GM12878 (cell line): ENCODE measurements at regions of chr17 and their contacts with region 1.

Region 1: GRCh38 chr17:65100316-65101140 is 36.6 kb upstream of the RGS9 start:
- DNase-seq: peak; percentile 77
- ATAC-seq: peak; percentile 93
- H3K4me3 ChIP-seq: peak overlapping the region; percentile 78
- H3K27ac ChIP-seq: peak overlapping the region; percentile 87
- H3K4me1 ChIP-seq: peaks cover 12% of the 10 kb centered on the region
- H3K27me3 ChIP-seq: no peaks in the 10 kb centered on the region
- CTCF ChIP-seq: peak; percentile 77 to 82 (median 82)
- EP300 ChIP-seq: no peak
- POLR2A ChIP-seq: peak; percentile 53; the same call in 1 of the 2 replicates
- RAD21 ChIP-seq: peak; percentile 76

Region 2: GRCh38 chr17:64968652-64969501 is 131.7 kb before region 1 on chr17:
- CTCF ChIA-PET with region 1: interaction called, 33 read pairs
- POLR2A ChIA-PET with region 1: interaction called, 3 read pairs
- RAD21 ChIA-PET with region 1: interaction called, 19 read pairs
- SMC1A ChIA-PET with region 1: interaction called, 60 read pairs
- in situ Hi-C with region 1: loop called (anchors 5 kb)
- intact Hi-C with region 1: loop called (anchors 2 kb)
- DNase-seq: peak; percentile 20
- ATAC-seq: peak; percentile 66
- H3K4me3 ChIP-seq: no peak overlapping the region
- H3K27ac ChIP-seq: peak overlapping the region; percentile 45
- H3K4me1 ChIP-seq: peaks cover 42% of the 10 kb centered on the region
- H3K27me3 ChIP-seq: no peaks in the 10 kb centered on the region
- CTCF ChIP-seq: no peak
- EP300 ChIP-seq: no peak
- POLR2A ChIP-seq: no peak
- RAD21 ChIP-seq: no peak

Region 3: GRCh38 chr17:64984851-64985521 is 115.5 kb before region 1 on chr17:
- CTCF ChIA-PET with region 1: interaction called, 13 read pairs
- POLR2A ChIA-PET with region 1: interaction called, 7 read pairs
- RAD21 ChIA-PET with region 1: interaction called, 20 read pairs
- SMC1A ChIA-PET with region 1: interaction called, 10 read pairs
- in situ Hi-C with region 1: no loop called
- intact Hi-C with region 1: no loop called
- DNase-seq: no peak
- ATAC-seq: peak; percentile 17
- H3K4me3 ChIP-seq: no peak overlapping the region
- H3K27ac ChIP-seq: peak overlapping the region; percentile 100
- H3K4me1 ChIP-seq: peaks cover 29% of the 10 kb centered on the region
- H3K27me3 ChIP-seq: no peaks in the 10 kb centered on the region
- CTCF ChIP-seq: no peak
- EP300 ChIP-seq: 0 out of 4 replicates have a peak, but pooled peaks of 1 of the 2 experiments have one; percentile 15
- POLR2A ChIP-seq: 0 out of 2 replicates have a peak, but pooled peaks have one; percentile 30
- RAD21 ChIP-seq: no peak

Region 4: DNA sequence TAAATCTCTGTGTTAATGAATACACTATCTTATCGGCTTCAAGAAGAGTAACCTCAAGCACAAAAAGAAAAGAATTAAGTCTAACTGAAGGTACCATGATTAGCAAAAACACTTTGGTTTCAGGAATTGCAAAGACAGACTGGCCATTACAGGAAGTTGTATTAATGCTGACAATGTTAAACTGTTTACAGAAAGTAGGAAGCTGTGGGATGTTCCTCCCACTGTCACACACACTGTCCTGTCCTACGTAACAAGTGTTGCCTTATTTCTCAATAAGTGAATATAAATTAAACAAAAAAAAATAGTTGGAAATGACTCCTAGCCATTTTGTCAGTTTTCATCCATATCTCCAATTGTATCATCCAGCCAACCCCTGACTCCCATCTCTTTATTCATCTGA is 52.6 kb before region 1 on chr17:
- CTCF ChIA-PET with region 1: interaction called, 5 read pairs
- POLR2A ChIA-PET with region 1: interaction called, 3 read pairs
- RAD21 ChIA-PET with region 1: interaction called, 15 read pairs
- SMC1A ChIA-PET with region 1: interaction called, 5 read pairs
- in situ Hi-C with region 1: no loop called
- intact Hi-C with region 1: no loop called
- DNase-seq: no peak
- ATAC-seq: peak; percentile 28; the same call in 1 of the 3 replicates
- H3K4me3 ChIP-seq: peak overlapping the region; percentile 48
- H3K27ac ChIP-seq: peak overlapping the region; percentile 43
- H3K4me1 ChIP-seq: peaks cover 33% of the 10 kb centered on the region
- H3K27me3 ChIP-seq: no peaks in the 10 kb centered on the region
- CTCF ChIP-seq: no peak
- EP300 ChIP-seq: no peak
- POLR2A ChIP-seq: no peak
- RAD21 ChIP-seq: no peak

Region 5: GRCh38 chr17:65137021-65137991 is 36.8 kb after region 1 on chr17 and contains the start of gene RGS9:
- CTCF ChIA-PET with region 1: interaction called, 13 read pairs
- POLR2A ChIA-PET with region 1: interaction called, 3 read pairs
- RAD21 ChIA-PET with region 1: interaction called, 14 read pairs
- SMC1A ChIA-PET with region 1: interaction called, 3 read pairs
- in situ Hi-C with region 1: no loop called
- intact Hi-C with region 1: no loop called
- DNase-seq: peak; percentile 38
- ATAC-seq: peak; percentile 98
- H3K4me3 ChIP-seq: peak within 1 kb of the TSS; percentile 66
- H3K27ac ChIP-seq: 0 out of 2 replicates have a peak within 1 kb of the TSS, but pooled peaks have one; percentile 21
- H3K4me1 ChIP-seq: peaks cover 8% of the 10 kb centered on the region
- H3K27me3 ChIP-seq: no peaks in the 10 kb centered on the region
- CTCF ChIP-seq: peak; percentile 83 to 92 (median 89)
- EP300 ChIP-seq: no peak
- POLR2A ChIP-seq: no peak
- RAD21 ChIP-seq: peak; percentile 77
- polyA plus RNA-seq, gene RGS9: 3.0 to 4.1 TPM

Region 6: GRCh38 chr17:65198653-65199382 is 98.3 kb after region 1 on chr17:
- CTCF ChIA-PET with region 1: interaction called, 21 read pairs
- POLR2A ChIA-PET with region 1: interaction called, 6 read pairs
- RAD21 ChIA-PET with region 1: interaction called, 21 read pairs
- SMC1A ChIA-PET with region 1: interaction called, 16 read pairs
- in situ Hi-C with region 1: no loop called
- intact Hi-C with region 1: loop called (anchors 1 kb)
- DNase-seq: peak; percentile 38
- ATAC-seq: peak; percentile 78
- H3K4me3 ChIP-seq: no peak overlapping the region
- H3K27ac ChIP-seq: no peak overlapping the region
- H3K4me1 ChIP-seq: no peaks in the 10 kb centered on the region
- H3K27me3 ChIP-seq: no peaks in the 10 kb centered on the region
- CTCF ChIP-seq: peak; percentile 48 to 85 (median 65)
- EP300 ChIP-seq: no peak
- POLR2A ChIP-seq: no peak
- RAD21 ChIP-seq: peak; percentile 91